Heart left ventricle (tissue), 16 donors: ENCODE measurements at regions of chr6 and their contacts with region 1.

Region 1: DNA sequence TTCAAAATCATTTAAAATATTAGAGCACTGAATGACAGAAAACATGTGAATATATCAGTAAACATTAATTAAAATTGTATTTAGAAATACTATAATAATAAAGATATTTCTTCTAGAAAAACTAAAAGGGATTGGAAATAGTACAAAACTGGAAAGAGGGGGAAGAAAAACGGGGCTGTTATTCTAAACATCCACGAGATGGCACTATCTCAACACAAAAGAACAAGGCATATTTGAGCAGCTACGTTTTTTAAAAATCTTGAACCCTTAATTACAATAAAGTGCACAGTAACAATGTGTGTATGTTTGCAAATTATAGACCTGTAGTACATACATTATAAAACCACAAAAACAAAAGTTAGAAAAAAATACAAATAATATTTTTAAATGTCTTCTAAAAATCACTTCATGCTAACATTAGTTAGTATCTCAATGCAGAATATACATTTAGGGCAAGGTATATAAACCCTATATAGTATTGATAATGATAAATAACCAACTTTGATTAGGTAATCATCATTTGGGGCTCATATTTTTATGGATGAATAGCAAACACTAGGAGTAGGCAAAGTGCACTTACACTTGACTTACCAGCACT is 42.5 kb upstream of the PNISR start:
- DNase-seq: no peak
- ATAC-seq: no peak
- H3K4me3 ChIP-seq: no peak overlapping the region
- H3K27ac ChIP-seq: no peak overlapping the region
- H3K4me1 ChIP-seq: no peaks in the 10 kb centered on the region
- H3K27me3 ChIP-seq: no peaks in the 10 kb centered on the region
- CTCF ChIP-seq: peak; percentile 43 to 79 (median 69)
- POLR2A ChIP-seq: no peak

Region 2: GRCh38 chr6:99613409-99613704 is 145.7 kb after region 1 on chr6:
- intact Hi-C with region 1: loop called in 1 of 10 experiments (anchors 10 kb)
- DNase-seq: peak in 2 of 5 donors; percentile 37 to 66
- ATAC-seq: peak in 3 of 4 donors; percentile 48 to 89 (median 75)
- H3K4me3 ChIP-seq: peak overlapping the region; percentile 22 to 57 (median 46)
- H3K27ac ChIP-seq: no peak overlapping the region
- H3K4me1 ChIP-seq: peaks cover 8 to 23% (median 15%) of the 10 kb centered on the region in 12 donors
- H3K27me3 ChIP-seq: peaks cover 74 to 100% (median 99%) of the 10 kb centered on the region in 9 donors
- CTCF ChIP-seq: peak; percentile 11 to 59 (median 34)
- POLR2A ChIP-seq: no peak

Region 3: GRCh38 chr6:99822741-99823512 is 355.3 kb after region 1 on chr6:
- intact Hi-C with region 1: loop called in 1 of 10 experiments (anchors 5 kb)
- DNase-seq: no peak
- ATAC-seq: peak in 1 of 4 donors; percentile 47
- H3K4me3 ChIP-seq: no peak overlapping the region
- H3K27ac ChIP-seq: no peak overlapping the region
- H3K4me1 ChIP-seq: peaks cover 0 to 4% (median 0%) of the 10 kb centered on the region in 12 donors
- H3K27me3 ChIP-seq: peaks cover 0 to 18% (median 0%) of the 10 kb centered on the region in 9 donors
- CTCF ChIP-seq: peak in 8 of 12 donors; percentile 19 to 47 (median 29)
- POLR2A ChIP-seq: no peak